ENCODE measurements at regions of chr17 and their contacts with region 1.

Region 1: DNA sequence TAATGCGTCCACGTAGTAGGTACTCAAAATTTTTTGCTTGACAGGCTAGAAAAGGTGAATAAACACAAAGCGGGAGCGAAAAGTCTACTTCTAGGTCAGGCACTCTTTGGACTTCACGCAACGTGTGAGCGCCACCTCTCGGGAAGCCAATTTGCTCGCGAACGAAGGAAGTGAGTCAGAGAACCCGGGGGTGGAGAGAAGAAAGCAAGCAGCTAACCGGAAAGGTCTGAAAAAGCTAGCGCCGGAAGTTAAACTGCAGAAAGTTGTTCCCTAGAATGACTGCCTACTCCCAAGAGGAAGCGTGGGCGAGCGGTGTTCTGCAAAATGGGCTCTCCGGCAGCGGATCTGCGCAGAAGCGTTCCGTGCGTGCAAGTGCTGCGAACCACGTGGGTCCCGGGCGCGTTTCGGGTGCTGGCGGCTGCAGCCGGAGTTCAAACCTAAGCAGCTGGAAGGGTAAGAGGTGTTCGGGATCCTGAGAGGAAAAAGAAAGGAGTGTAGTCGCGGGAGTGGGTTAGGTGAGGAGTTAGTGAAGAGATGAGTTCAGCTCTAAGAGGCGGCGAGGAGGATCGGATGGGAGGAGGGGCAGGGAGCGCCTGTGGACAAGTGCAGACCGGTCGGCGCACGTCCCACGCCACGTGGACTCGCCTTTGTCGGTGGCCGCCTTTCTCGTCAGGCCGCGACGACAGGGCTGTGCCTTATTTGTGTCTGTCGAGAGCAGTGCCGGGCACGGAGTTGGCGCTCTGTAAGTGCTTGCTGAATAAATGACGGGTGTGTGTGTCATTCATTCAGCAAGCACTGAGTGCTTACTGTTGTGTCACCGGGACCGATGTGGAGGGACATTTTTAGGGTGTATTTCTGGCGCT is at the start of gene NME1:
- DNase-seq: peak; percentile 98
- H3K4me3 ChIP-seq: peak within 1 kb of the TSS; percentile 68
- H3K27ac ChIP-seq: peak within 1 kb of the TSS; percentile 74
- H3K4me1 ChIP-seq: peaks cover 6% of the 10 kb centered on the region
- H3K27me3 ChIP-seq: no peaks in the 10 kb centered on the region
- CTCF ChIP-seq: peak; percentile 65
- total RNA-seq, gene NME1: 37.1 to 168 TPM

Region 2: GRCh38 chr17:51000835-51001638 is 152.4 kb before region 1 on chr17:
- intact Hi-C with region 1: loop called (anchors 5 kb)
- DNase-seq: peak; percentile 22
- H3K4me3 ChIP-seq: no peak overlapping the region
- H3K27ac ChIP-seq: no peak overlapping the region
- H3K4me1 ChIP-seq: no peaks in the 10 kb centered on the region
- H3K27me3 ChIP-seq: no peaks in the 10 kb centered on the region
- CTCF ChIP-seq: peak; percentile 25

Region 3: GRCh38 chr17:51200295-51200694 is 46.9 kb after region 1 on chr17:
- intact Hi-C with region 1: no loop called
- DNase-seq: no peak
- H3K4me3 ChIP-seq: no peak overlapping the region
- H3K27ac ChIP-seq: no peak overlapping the region
- H3K4me1 ChIP-seq: no peaks in the 10 kb centered on the region
- H3K27me3 ChIP-seq: no peaks in the 10 kb centered on the region
- CTCF ChIP-seq: no peak

Region 4: DNA sequence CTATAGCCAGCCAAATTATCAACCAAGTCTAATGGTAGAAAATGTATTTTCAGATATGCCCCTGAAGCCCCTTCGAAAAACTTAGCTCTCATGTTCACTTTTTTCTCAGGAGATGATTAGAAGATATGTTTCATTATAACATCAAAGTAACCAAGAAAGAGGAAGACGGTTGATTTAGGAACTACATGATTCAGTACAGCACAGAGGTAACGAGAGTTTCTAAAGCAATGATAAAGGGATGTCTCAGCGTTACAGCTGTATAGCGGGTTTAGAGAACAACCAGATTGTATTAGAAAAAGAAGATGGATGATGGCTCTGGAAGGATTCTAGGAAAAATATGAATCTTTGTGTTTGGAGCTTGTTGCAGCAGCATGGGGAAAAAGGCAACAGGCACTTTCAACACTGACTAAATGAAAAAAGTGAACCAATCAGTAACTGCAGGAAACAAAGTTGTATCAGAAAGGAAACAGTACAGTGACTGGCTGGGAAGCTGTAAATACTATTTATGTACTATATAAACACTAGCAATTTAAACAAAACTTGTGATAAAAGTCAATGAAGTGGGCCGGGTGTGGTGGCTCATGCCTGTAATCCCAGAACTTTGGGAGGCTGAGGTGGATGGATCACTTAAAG is 84.9 kb after region 1 on chr17:
- intact Hi-C with region 1: no loop called
- DNase-seq: no peak
- H3K4me3 ChIP-seq: no peak overlapping the region
- H3K27ac ChIP-seq: no peak overlapping the region
- H3K4me1 ChIP-seq: no peaks in the 10 kb centered on the region
- H3K27me3 ChIP-seq: no peaks in the 10 kb centered on the region
- CTCF ChIP-seq: no peak

Measured in colonic mucosa (tissue), 4 donors.